Left lung (tissue), 14 donors: ENCODE measurements at regions of chr2 and their contacts with region 1.

Region 1: DNA sequence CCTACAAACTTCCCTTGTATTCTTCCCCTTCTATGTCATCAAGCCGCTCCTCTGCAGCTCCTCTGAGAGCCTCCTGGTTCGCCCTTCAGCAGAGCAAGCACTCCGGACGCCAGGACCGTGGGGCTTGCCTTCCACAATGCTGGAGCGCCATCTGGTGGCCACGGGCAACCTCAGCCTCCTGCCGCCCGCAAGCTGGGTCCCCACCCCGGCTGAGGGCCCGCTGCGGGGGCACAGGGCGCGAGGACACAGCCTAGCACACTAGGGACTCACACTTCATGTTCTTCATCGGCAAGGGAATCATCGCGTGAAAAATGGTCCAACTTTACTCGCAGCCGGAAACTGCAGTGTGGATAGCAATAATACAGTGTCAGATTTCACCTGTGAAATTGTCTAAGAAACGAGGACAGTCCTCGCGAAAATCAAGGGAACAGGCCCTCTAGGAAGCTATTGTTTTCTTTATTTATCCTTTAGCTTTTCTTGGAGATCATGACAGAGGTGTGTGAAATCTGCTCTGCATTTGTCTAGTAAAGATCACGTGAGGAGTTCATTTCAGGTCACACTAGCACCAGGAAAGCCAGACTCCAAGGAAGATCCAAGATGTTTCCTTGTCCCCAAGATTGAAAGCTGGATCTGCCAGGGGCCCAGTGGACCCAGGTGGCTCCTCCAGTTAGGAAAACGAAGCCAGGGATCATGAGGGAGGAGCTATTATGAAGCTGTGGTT is 5.8 kb downstream of the PRLH start:
- DNase-seq: peak; percentile 82 to 96 (median 92)
- ATAC-seq: peak; percentile 93
- H3K4me3 ChIP-seq: no peak overlapping the region
- H3K27ac ChIP-seq: no peak overlapping the region
- H3K4me1 ChIP-seq: peaks cover 4 to 17% of the 10 kb centered on the region in 2 donors
- H3K27me3 ChIP-seq: no peaks in the 10 kb centered on the region
- CTCF ChIP-seq: peak; percentile 95 to 98

Region 2: DNA sequence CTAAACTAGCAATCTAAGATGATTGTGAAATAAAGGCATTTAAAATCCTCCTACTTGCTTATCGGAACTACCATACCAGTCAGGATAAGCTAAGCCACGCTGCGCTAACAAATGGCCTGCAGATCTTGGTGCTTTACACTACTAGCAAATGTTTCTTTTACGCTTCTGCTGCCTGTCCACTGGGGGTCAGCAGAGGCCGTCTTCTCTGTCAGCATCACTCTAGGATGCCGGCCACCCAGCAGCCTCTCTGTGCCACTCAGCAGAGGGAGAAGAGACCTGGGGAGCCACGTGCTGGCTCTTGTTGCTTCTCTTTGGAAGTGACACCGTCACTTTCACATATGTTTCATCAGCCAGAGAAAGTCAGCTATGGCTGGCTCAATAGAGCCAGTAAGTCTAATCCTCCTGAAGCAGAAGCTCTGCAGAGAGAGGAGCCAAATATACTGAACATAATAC is 449.9 kb before region 1 on chr2:
- intact Hi-C with region 1: loop called in 1 of 2 experiments (anchors 5 kb)
- DNase-seq: peak; percentile 15 to 85 (median 68)
- ATAC-seq: peak; percentile 97
- H3K4me3 ChIP-seq: no peak overlapping the region
- H3K27ac ChIP-seq: no peak overlapping the region
- H3K4me1 ChIP-seq: peaks cover 0 to 10% of the 10 kb centered on the region in 2 donors
- H3K27me3 ChIP-seq: no peaks in the 10 kb centered on the region
- CTCF ChIP-seq: peak; percentile 35 to 67

Region 3: GRCh38 chr2:237171396-237171795 is 400.8 kb before region 1 on chr2:
- intact Hi-C with region 1: no loop called
- DNase-seq: peak in 2 of 4 donors; percentile 87 to 93
- ATAC-seq: peak; percentile 84
- H3K4me3 ChIP-seq: no peak overlapping the region
- H3K27ac ChIP-seq: peak overlapping the region in 1 of 2 donors; percentile 63
- H3K4me1 ChIP-seq: no peaks in the 10 kb centered on the region
- H3K27me3 ChIP-seq: no peaks in the 10 kb centered on the region
- CTCF ChIP-seq: no peak

Region 4: DNA sequence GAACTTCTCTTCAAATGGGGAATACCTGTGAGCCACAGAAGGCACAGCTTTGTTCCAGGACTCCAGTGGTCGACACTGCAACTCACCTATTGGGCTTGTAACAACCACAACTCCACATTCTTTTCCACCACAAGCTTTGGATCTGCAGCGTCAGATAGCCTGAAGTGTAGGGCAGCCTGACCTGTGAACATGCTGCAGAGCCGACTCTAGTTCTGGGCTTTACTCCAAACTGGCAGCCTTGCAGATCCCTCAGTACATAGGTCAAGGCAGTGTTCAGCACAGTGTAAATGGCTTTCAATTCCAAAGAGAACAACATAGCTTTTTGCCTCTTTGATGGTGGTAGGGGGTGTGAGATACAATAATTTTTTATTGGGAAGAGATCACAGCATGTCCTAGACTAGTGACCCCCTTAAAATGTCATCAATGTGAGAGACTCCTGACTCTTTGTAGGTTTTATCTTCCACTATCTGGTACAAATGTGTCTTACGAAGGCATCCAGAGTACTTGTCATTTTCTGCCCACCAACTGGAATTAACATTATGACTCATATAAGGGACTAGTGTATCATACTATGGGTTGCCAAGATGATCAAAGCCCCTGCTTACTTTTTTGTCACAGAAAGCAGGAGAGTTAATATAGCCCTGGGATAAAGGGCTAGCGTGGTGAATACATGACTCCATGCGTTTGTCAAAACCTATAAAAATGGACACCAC is 336.6 kb before region 1 on chr2:
- intact Hi-C with region 1: no loop called
- DNase-seq: peak in 3 of 4 donors; percentile 46 to 83 (median 61)
- ATAC-seq: peak; percentile 91
- H3K4me3 ChIP-seq: no peak overlapping the region
- H3K27ac ChIP-seq: peak overlapping the region in 1 of 2 donors; percentile 46
- H3K4me1 ChIP-seq: no peaks in the 10 kb centered on the region
- H3K27me3 ChIP-seq: no peaks in the 10 kb centered on the region
- CTCF ChIP-seq: no peak

Region 5: DNA sequence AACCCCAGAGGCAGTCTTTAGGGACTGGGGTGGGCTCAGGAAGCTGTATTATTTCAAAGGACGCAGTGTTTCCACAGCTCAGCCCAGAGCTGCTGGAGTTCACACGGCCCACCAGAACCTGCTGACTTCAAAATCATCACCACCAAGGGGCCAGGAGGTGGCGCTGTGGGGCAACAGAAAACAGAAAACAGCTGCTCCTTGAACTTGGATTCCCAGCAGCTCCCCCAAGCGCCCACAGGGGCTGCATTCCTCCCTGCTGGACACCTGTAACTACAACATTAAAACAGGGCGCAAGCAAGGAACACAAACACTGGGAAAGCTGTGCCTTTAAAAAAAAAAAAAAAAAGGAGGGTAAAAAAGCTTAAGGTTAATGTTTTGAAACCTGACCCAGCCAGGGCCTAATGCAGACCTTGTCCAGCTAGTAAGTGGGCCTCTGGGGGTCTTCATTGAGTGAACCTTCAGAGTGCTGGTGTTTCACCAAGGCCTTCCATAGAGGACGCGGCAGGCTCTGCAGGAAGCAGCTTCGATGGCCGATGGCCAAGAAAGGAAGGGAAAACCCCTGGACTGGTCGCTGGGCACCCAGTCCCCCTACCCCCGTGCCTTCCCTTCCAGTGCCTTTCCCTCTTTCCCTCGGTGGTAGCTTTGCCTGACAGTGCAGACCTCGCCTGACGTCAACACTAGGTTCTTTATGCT is 59.3 kb before region 1 on chr2:
- intact Hi-C with region 1: loop called in 1 of 2 experiments (anchors 5 kb)
- DNase-seq: peak; percentile 79 to 92 (median 84)
- ATAC-seq: peak; percentile 74
- H3K4me3 ChIP-seq: no peak overlapping the region
- H3K27ac ChIP-seq: peak overlapping the region in 1 of 2 donors; percentile 13
- H3K4me1 ChIP-seq: peaks cover 9 to 35% of the 10 kb centered on the region in 2 donors
- H3K27me3 ChIP-seq: no peaks in the 10 kb centered on the region
- CTCF ChIP-seq: peak; percentile 75 to 89

Region 6: DNA sequence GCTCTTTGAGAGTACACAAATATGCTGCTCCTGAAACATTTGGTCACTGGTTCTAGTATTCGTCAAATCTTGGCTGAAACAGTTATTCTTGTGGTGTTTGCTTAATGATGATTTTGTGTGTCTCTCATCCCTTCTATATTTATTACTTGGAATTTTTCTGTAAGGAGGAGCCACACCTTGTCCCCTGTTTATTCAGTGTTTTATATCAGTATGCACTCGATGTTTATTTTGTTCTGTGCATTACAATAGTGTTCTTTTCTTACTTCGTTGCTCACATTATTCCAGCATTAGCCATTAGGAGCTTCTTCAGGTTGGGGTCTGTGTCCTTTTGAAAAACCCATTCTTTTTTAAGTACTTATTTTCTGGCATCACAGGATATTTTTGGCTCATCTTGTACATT is 282.1 kb after region 1 on chr2:
- intact Hi-C with region 1: no loop called
- DNase-seq: no peak
- ATAC-seq: no peak
- H3K4me3 ChIP-seq: no peak overlapping the region
- H3K27ac ChIP-seq: no peak overlapping the region
- H3K4me1 ChIP-seq: peaks cover 0 to 9% of the 10 kb centered on the region in 2 donors
- H3K27me3 ChIP-seq: peaks cover 0 to 17% of the 10 kb centered on the region in 2 donors
- CTCF ChIP-seq: no peak

Region 7: DNA sequence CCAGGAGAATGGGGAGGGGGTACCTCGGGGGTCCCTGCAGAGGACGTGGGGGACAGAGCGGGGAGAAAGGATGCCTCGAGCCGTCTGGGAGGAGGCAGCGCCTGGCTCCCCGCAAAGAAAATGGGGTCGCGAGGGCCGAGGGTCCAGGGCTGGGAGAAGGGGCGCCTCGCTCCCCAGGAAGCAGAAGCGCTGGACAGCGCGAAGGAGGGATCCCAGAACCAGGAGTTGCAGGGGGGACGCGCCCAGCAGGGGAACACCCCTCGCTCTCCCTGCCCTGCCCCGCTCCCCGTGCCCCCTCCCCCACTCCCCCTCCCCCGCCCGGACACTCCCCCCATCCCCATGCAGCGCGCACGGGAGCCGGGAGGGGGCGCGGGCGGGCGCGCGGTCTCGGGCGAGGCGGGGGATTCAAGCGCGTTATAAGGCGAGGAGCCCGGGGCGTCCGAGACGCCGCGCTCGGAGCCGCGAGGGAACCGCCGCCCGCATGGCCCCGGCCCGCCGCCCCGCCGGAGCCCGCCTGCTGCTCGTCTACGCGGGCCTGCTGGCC is 586.4 kb after region 1 on chr2 and contains the start of gene ERFE:
- intact Hi-C with region 1: no loop called
- DNase-seq: peak in 2 of 4 donors; percentile 44 to 80
- ATAC-seq: peak; percentile 76
- H3K4me3 ChIP-seq: peak within 1 kb of the TSS in 1 of 2 donors; percentile 22
- H3K27ac ChIP-seq: no peak within 1 kb of the TSS
- H3K4me1 ChIP-seq: peaks cover 0 to 20% of the 10 kb centered on the region in 2 donors
- H3K27me3 ChIP-seq: peaks cover 24 to 64% of the 10 kb centered on the region in 2 donors
- CTCF ChIP-seq: peak; percentile 26 to 42
- polyA plus RNA-seq, gene ERFE: 0.15 to 0.77 (median 0.47) TPM